ENCODE measurements at regions of chr6 and their contacts with region 1.

Region 1: GRCh38 chr6:102215425-102215824 is 821.9 kb downstream of the GRIK2 start:
- DNase-seq: no peak
- ATAC-seq: no peak
- H3K4me3 ChIP-seq: no peak overlapping the region
- H3K27ac ChIP-seq: no peak overlapping the region
- H3K4me1 ChIP-seq: no peaks in the 10 kb centered on the region
- H3K27me3 ChIP-seq: no peaks in the 10 kb centered on the region
- CTCF ChIP-seq: no peak
- EP300 ChIP-seq: no peak
- POLR2A ChIP-seq: no peak
- RAD21 ChIP-seq: no peak

Region 2: DNA sequence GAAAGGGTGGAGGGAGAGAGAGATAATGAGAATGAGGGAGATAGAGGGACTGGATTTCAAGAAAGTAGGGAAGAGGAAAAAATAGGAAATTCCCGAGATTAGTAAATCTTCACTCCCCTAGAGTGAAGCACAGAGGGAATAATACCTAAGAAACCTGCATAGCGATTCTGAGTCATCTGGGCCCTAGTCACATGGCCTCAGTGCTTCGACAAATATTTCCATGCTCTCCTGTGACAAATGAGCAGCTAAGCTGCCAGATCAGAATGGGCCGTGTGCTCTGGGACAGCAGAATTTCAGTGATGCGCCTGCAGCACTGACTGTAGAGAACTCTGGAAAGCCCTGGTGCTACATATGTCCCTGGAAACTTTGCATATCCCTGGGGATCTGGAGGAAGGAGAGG is 870.5 kb before region 1 on chr6:
- CTCF ChIA-PET with region 1: no interaction called
- POLR2A ChIA-PET with region 1: no interaction called
- in situ Hi-C with region 1: no loop called
- intact Hi-C with region 1: loop called (anchors 5 kb)
- DNase-seq: no peak
- ATAC-seq: no peak
- H3K4me3 ChIP-seq: no peak overlapping the region
- H3K27ac ChIP-seq: no peak overlapping the region
- H3K4me1 ChIP-seq: no peaks in the 10 kb centered on the region
- H3K27me3 ChIP-seq: no peaks in the 10 kb centered on the region
- CTCF ChIP-seq: no peak
- EP300 ChIP-seq: no peak
- POLR2A ChIP-seq: no peak
- RAD21 ChIP-seq: no peak

Measured in HepG2 (cell line).